WTC11 (cell line): ENCODE measurements at regions of chr16 and their contacts with region 1.

Region 1: GRCh38 chr16:84186685-84187437 is at the start of gene TAF1C:
- DNase-seq: peak; percentile 87
- ATAC-seq: peak; percentile 78
- H3K4me3 Mint-ChIP-seq: peak within 1 kb of the TSS; percentile 91
- H3K27ac Mint-ChIP-seq: peak within 1 kb of the TSS; percentile 60
- H3K4me1 Mint-ChIP-seq: peaks cover 9% of the 10 kb centered on the region; the same call in 1 of the 2 replicates
- H3K27me3 Mint-ChIP-seq: no peaks in the 10 kb centered on the region; the same call in none of the 2 replicates
- CTCF ChIP-seq: peak; percentile 78
- total RNA-seq, gene TAF1C: 71.2 to 89.7 TPM (median 74.7 TPM) in 3 replicates

Region 2: DNA sequence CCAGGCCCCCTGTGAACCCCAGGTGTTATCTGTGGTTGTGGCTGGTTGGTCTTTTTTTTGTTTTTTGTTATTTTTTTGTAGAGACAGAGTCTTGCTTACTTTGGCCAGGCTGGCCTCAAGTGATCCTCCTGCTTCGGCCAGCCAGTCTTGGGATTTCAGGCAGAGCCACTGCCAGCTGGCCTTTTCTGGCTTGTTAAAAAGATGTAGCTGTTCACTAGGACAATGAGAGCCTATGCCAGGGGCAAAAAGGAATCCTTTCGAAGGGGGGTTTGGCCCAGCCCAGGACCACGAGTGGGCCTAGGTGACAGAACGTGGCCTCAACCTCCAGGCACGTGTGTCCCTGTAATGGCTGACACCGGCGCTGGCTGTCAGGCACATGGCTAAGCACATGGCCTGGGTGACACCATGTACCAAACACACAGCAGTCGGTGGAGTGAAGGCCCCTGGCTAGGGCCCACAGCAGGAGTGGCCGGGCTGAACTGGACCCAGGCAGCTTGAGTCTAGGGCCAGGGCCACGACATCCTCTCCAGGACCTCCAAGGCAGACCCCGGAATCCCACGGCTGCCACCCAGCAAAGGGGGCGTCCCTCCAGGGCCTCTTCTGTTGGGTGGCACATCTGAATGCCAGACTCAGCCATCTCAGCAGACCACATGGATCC is 137.3 kb before region 1 on chr16:
- CTCF ChIA-PET with region 1: no interaction called
- POLR2A ChIA-PET with region 1: no interaction called
- DNase-seq: no peak
- ATAC-seq: no peak
- H3K4me3 Mint-ChIP-seq: no peak overlapping the region
- H3K27ac Mint-ChIP-seq: no peak overlapping the region
- H3K4me1 Mint-ChIP-seq: no peaks in the 10 kb centered on the region; the same call in 1 of the 2 replicates
- H3K27me3 Mint-ChIP-seq: no peaks in the 10 kb centered on the region
- CTCF ChIP-seq: no peak

Region 3: DNA sequence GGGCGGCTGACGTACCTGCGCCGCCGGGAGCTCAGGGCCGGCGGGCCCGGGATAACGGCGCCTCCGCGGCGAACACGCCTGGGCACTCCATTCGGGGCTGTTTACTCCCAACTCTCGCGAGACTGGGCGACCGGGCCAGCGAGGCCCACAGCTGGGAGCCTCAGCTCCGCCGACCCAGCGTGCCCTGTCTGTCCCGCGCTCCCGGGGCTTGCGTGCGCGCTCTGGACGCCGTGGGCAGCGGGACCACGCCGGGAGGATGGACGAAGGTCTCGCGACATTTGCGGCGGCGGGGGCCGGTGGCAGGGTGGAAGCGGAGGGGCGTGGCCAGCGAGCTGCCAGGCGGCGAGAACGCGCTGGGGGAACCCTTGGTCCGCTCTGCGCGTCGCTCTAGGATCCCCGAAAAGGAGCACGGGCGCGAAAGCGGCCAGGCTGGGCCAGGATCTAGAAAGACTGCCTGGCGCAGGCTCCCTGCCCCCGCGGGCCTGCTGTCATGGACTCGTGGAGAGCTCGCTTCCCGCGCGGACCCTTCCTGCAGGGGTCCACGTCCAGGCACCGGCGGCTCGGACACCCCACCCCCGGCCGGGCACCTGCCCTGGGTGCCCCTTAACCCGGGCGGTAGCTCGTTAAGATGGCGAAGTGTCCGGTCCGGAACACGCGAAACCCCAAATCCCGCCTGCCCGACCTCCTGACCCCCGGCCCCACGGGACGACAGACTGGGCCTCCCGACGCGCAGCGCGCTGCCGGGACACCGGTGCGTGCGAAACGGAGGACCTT is 70.0 kb before region 1 on chr16 and contains the start of gene MBTPS1:
- CTCF ChIA-PET with region 1: interaction called, 29 read pairs
- POLR2A ChIA-PET with region 1: no interaction called
- DNase-seq: peak; percentile 98
- ATAC-seq: peak; percentile 95
- H3K4me3 Mint-ChIP-seq: peak within 1 kb of the TSS; percentile 94
- H3K27ac Mint-ChIP-seq: peak within 1 kb of the TSS; percentile 97
- H3K4me1 Mint-ChIP-seq: peaks cover 11% of the 10 kb centered on the region
- H3K27me3 Mint-ChIP-seq: no peaks in the 10 kb centered on the region
- CTCF ChIP-seq: no peak
- total RNA-seq, gene MBTPS1: 45.1 to 47.4 TPM (median 46.9 TPM) in 3 replicates

Region 4: GRCh38 chr16:84161801-84162200 is 25.1 kb before region 1 on chr16:
- CTCF ChIA-PET with region 1: interaction called, 20 read pairs
- POLR2A ChIA-PET with region 1: no interaction called
- DNase-seq: no peak
- ATAC-seq: no peak
- H3K4me3 Mint-ChIP-seq: no peak overlapping the region
- H3K27ac Mint-ChIP-seq: no peak overlapping the region
- H3K4me1 Mint-ChIP-seq: no peaks in the 10 kb centered on the region
- H3K27me3 Mint-ChIP-seq: no peaks in the 10 kb centered on the region; the same call in 1 of the 2 replicates
- CTCF ChIP-seq: no peak

Region 5: GRCh38 chr16:84198401-84198800 is 11.5 kb after region 1 on chr16:
- CTCF ChIA-PET with region 1: interaction called, 16 read pairs
- POLR2A ChIA-PET with region 1: no interaction called
- DNase-seq: no peak
- ATAC-seq: no peak
- H3K4me3 Mint-ChIP-seq: no peak overlapping the region
- H3K27ac Mint-ChIP-seq: no peak overlapping the region
- H3K4me1 Mint-ChIP-seq: 0 out of 2 replicates have a peak, but pooled peaks cover 3% of the 10 kb centered on the region
- H3K27me3 Mint-ChIP-seq: no peaks in the 10 kb centered on the region
- CTCF ChIP-seq: no peak

Region 6: GRCh38 chr16:84234321-84235241 is 47.7 kb after region 1 on chr16:
- CTCF ChIA-PET with region 1: interaction called, 12 read pairs
- POLR2A ChIA-PET with region 1: no interaction called
- DNase-seq: no peak
- ATAC-seq: no peak
- H3K4me3 Mint-ChIP-seq: no peak overlapping the region
- H3K27ac Mint-ChIP-seq: no peak overlapping the region
- H3K4me1 Mint-ChIP-seq: no peaks in the 10 kb centered on the region
- H3K27me3 Mint-ChIP-seq: no peaks in the 10 kb centered on the region; the same call in 1 of the 2 replicates
- CTCF ChIP-seq: no peak

Region 7: DNA sequence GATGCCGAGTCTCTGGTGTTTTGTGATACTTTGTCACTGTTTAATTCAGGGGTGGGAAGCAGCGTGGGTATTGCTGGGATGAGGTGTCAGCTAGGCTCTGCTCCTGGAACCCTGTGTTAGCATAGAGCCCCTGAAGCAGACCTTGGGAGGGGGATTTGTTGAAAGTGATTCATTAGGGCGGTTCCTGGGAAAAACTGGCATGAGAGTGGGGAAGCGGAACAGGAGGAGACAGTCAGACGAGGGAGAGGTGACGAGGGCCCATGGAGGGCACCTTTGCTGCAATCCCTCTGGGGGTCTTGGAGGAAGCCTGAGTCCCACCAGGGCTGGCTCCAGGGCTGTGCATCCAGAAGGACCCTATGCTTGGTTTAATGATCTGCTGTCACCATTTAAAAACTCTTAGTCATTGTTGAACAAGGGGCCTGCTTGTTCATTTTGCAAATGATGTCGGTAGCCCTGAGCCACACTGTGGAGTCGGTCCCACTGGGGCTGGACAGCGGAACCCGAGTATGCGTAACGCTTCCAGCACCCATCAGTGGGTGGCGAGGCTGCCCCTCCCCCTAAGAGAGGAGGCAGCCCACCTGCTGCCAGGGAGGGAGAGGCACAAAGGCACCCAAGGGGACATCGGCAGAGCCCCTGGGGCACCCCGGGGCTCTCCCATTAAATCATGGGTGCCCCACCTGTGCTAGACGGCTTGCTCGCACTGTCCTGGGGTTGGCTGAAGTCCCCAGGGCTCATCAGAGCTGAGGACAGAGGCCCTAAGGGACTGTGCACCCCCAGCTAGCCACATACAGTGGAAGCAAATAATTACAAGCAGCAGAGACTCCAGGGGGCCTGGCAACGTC is 143.2 kb after region 1 on chr16:
- CTCF ChIA-PET with region 1: no interaction called
- POLR2A ChIA-PET with region 1: no interaction called
- DNase-seq: no peak
- ATAC-seq: no peak
- H3K4me3 Mint-ChIP-seq: no peak overlapping the region
- H3K27ac Mint-ChIP-seq: no peak overlapping the region
- H3K4me1 Mint-ChIP-seq: peaks cover 8% of the 10 kb centered on the region
- H3K27me3 Mint-ChIP-seq: no peaks in the 10 kb centered on the region
- CTCF ChIP-seq: no peak

Region 8: DNA sequence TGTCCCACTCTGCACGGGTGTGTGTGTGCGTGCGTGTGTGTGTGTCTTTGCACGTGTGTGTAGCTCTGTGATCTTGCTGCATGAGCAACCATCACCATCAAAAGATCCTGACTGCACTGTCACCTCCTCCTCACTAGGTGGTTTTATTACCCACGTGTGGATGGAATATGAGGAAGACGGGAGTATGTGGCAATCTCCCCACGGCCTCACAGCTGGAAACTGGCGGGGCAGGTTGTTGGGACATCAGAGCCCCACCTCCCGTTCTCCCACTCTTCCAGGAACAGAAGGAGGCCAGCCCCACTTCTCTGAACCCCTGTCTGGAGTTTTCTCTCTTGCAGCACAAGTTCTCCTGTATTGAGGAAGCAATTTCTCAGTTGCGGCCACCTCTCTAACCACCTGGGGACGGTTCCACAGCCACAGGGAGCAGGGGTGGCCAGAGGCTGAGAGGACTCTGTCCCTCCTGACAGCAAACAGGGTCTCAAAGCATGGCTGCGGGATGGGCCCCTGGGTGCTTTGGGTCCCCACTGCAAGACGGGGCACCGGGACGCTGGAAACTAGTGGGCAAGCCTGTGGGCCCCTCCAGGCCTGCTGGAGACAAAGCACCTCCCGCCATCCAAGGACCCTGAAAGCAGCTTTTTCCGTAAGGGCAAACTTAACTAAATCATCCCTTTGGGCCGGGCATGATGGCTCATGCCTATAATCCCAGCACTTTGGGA is 153.6 kb after region 1 on chr16:
- CTCF ChIA-PET with region 1: no interaction called
- POLR2A ChIA-PET with region 1: no interaction called
- DNase-seq: no peak
- ATAC-seq: no peak
- H3K4me3 Mint-ChIP-seq: no peak overlapping the region
- H3K27ac Mint-ChIP-seq: no peak overlapping the region
- H3K4me1 Mint-ChIP-seq: no peaks in the 10 kb centered on the region
- H3K27me3 Mint-ChIP-seq: no peaks in the 10 kb centered on the region
- CTCF ChIP-seq: no peak

Region 9: GRCh38 chr16:84497723-84498610 is 311.1 kb after region 1 on chr16:
- CTCF ChIA-PET with region 1: no interaction called
- POLR2A ChIA-PET with region 1: no interaction called
- DNase-seq: no peak
- ATAC-seq: no peak
- H3K4me3 Mint-ChIP-seq: no peak overlapping the region
- H3K27ac Mint-ChIP-seq: no peak overlapping the region
- H3K4me1 Mint-ChIP-seq: peaks cover 10% of the 10 kb centered on the region; the same call in 1 of the 2 replicates
- H3K27me3 Mint-ChIP-seq: no peaks in the 10 kb centered on the region
- CTCF ChIP-seq: no peak